MCF 10A (cell line): ENCODE measurements at regions of chr1 and their contacts with region 1.

Region 1: DNA sequence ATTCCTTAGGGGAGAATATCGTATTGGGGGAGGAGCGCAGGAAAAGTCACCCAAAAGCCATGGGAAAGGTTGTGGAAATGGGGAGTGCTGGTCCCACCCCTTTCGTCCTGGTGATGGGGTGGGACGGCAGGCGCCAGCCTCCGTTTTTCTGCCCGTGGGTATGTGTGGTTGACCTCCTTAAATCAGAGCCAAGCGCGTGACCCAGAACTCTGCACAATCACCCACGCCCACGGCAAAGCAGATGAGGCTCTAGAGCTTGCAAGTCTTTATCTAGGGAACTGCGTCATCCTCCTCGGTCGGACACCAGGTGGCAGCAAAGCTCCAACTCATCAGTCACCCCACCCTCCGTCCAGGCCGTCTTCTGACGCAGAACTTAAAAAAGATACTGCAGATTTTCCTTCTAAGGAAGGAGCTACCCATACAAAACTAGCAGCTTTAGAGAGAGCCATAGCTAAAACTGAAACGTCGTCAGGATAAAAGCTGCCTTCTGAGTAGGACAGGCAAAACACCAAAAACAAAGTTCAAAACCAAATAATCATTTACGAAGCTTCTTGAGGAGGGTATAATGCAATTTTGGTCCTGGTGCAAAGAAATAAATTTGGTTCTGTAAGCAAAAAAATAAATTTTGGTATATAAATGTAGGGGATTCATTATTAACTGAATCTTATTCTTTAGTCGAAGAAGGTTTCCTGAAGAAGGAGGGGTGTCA is 62.0 kb downstream of the TBX19 start:
- DNase-seq: peak; percentile 86
- H3K4me3 Mint-ChIP-seq: peak overlapping the region; percentile 37
- H3K27ac Mint-ChIP-seq: no peak overlapping the region
- H3K4me1 Mint-ChIP-seq: peaks cover 18% of the 10 kb centered on the region
- H3K27me3 Mint-ChIP-seq: no peaks in the 10 kb centered on the region
- CTCF ChIP-seq: peak; percentile 88

Region 2: DNA sequence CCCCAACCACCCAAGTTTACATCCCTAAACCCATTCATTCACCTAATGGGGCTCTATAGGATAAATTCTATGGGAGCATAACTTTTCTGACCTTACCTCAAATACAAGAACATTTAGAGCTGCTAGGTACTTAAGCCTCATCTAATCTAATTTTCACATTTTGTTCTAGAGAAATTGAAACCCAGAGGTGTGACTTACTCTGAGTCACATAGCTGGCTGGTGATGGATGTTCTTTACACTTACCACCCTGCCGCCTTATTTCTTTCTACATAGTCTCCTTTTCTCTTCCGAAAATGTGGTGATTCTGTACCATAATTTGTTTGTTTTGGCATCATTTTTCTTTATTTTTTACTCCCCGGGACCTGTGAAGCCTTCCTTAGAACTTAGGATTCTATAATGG is 143.7 kb before region 1 on chr1:
- CTCF ChIA-PET with region 1: no interaction called
- POLR2A ChIA-PET with region 1: no interaction called
- intact Hi-C with region 1: no loop called
- DNase-seq: peak; percentile 37
- H3K4me3 Mint-ChIP-seq: no peak overlapping the region
- H3K27ac Mint-ChIP-seq: no peak overlapping the region
- H3K4me1 Mint-ChIP-seq: peaks cover 22% of the 10 kb centered on the region
- H3K27me3 Mint-ChIP-seq: no peaks in the 10 kb centered on the region
- CTCF ChIP-seq: no peak

Region 3: DNA sequence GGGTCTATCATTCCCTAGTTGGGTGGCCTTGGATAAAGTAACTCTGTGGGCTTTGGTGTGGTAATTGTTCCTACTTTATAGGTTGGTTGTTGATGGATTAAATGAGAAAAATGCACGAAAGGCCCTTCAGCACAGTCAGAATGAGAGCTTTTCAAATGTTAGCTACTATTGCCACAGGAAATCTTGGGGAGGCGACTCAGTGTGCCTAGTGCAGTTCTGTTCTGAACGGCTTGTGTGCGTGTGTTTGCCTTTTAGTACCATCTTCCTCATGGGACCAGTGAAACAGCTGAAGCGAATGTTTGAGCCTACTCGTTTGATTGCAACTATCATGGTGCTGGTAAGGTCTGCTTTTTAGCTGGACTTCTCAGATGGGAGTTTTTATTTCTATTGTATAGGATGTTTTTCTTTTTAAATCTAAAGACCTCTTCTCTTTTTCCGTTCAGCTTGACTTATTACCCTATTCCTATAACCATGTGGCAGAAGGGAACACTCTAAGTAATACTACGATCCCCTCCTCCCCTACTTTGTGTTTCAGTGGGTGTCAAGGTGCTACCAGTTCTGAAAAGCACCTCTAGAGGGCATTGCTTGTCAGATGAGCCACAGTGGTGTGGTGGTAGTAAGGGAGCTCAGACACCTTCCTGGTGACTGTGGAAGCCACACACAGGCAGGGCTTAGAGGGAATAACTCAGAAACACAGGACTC is 107.7 kb before region 1 on chr1:
- CTCF ChIA-PET with region 1: interaction called, 70 read pairs
- POLR2A ChIA-PET with region 1: no interaction called
- intact Hi-C with region 1: no loop called
- DNase-seq: peak; percentile 84
- H3K4me3 Mint-ChIP-seq: no peak overlapping the region
- H3K27ac Mint-ChIP-seq: no peak overlapping the region
- H3K4me1 Mint-ChIP-seq: peaks cover 24% of the 10 kb centered on the region
- H3K27me3 Mint-ChIP-seq: no peaks in the 10 kb centered on the region
- CTCF ChIP-seq: peak; percentile 81

Region 4: GRCh38 chr1:168379110-168379860 is 36.6 kb after region 1 on chr1:
- CTCF ChIA-PET with region 1: interaction called, 51 read pairs
- POLR2A ChIA-PET with region 1: no interaction called
- intact Hi-C with region 1: no loop called
- DNase-seq: peak; percentile 73
- H3K4me3 Mint-ChIP-seq: no peak overlapping the region
- H3K27ac Mint-ChIP-seq: no peak overlapping the region
- H3K4me1 Mint-ChIP-seq: peaks cover 7% of the 10 kb centered on the region
- H3K27me3 Mint-ChIP-seq: no peaks in the 10 kb centered on the region
- CTCF ChIP-seq: no peak

Region 5: GRCh38 chr1:168439456-168440375 is 97.0 kb after region 1 on chr1:
- CTCF ChIA-PET with region 1: interaction called, 68 read pairs
- POLR2A ChIA-PET with region 1: interaction called, 3 read pairs
- intact Hi-C with region 1: loop called (anchors 1 kb)
- DNase-seq: peak; percentile 91
- H3K4me3 Mint-ChIP-seq: no peak overlapping the region
- H3K27ac Mint-ChIP-seq: no peak overlapping the region
- H3K4me1 Mint-ChIP-seq: peaks cover 22% of the 10 kb centered on the region
- H3K27me3 Mint-ChIP-seq: peaks cover 4% of the 10 kb centered on the region
- CTCF ChIP-seq: peak; percentile 91

Region 6: GRCh38 chr1:168560370-168560769 is 217.6 kb after region 1 on chr1:
- CTCF ChIA-PET with region 1: interaction called, 37 read pairs
- POLR2A ChIA-PET with region 1: interaction called, 3 read pairs
- intact Hi-C with region 1: no loop called
- DNase-seq: no peak
- H3K4me3 Mint-ChIP-seq: no peak overlapping the region
- H3K27ac Mint-ChIP-seq: no peak overlapping the region
- H3K4me1 Mint-ChIP-seq: peaks cover 15% of the 10 kb centered on the region
- H3K27me3 Mint-ChIP-seq: peaks cover 40% of the 10 kb centered on the region
- CTCF ChIP-seq: no peak

Region 7: GRCh38 chr1:168623003-168623828 is 280.5 kb after region 1 on chr1:
- CTCF ChIA-PET with region 1: interaction called, 13 read pairs
- POLR2A ChIA-PET with region 1: no interaction called
- intact Hi-C with region 1: no loop called
- DNase-seq: peak; percentile 91
- H3K4me3 Mint-ChIP-seq: no peak overlapping the region
- H3K27ac Mint-ChIP-seq: no peak overlapping the region
- H3K4me1 Mint-ChIP-seq: peaks cover 7% of the 10 kb centered on the region
- H3K27me3 Mint-ChIP-seq: no peaks in the 10 kb centered on the region
- CTCF ChIP-seq: no peak